ENCODE measurements at regions of chr11 and their contacts with region 1.

Region 1: GRCh38 chr11:69337211-69337721 is 43.3 kb downstream of the MYEOV start:
- DNase-seq: peak in 4 of 9 experiments; percentile 28 to 67 (median 56)
- ATAC-seq: peak; percentile 86
- H3K4me3 ChIP-seq: peak overlapping the region in 1 of 2 experiments; percentile 2
- H3K4me3 Mint-ChIP-seq: peak overlapping the region; percentile 62
- H3K27ac ChIP-seq: no peak overlapping the region
- H3K27ac Mint-ChIP-seq: peak overlapping the region; percentile 89
- H3K4me1 ChIP-seq: peaks cover 14% of the 10 kb centered on the region
- H3K4me1 Mint-ChIP-seq: peaks cover 40% of the 10 kb centered on the region
- H3K27me3 ChIP-seq: no peaks in the 10 kb centered on the region
- H3K27me3 Mint-ChIP-seq: no peaks in the 10 kb centered on the region
- CTCF ChIP-seq: no peak

Region 2: GRCh38 chr11:69075421-69076128 is 261.7 kb before region 1 on chr11:
- CTCF ChIA-PET with region 1: no interaction called
- POLR2A ChIA-PET with region 1: no interaction called
- intact Hi-C with region 1: no loop called
- DNase-seq: no peak
- ATAC-seq: no peak
- H3K4me3 ChIP-seq: no peak overlapping the region
- H3K4me3 Mint-ChIP-seq: no peak overlapping the region
- H3K27ac ChIP-seq: no peak overlapping the region
- H3K27ac Mint-ChIP-seq: no peak overlapping the region
- H3K4me1 ChIP-seq: peaks cover 16% of the 10 kb centered on the region
- H3K4me1 Mint-ChIP-seq: peaks cover 20% of the 10 kb centered on the region
- H3K27me3 ChIP-seq: no peaks in the 10 kb centered on the region
- H3K27me3 Mint-ChIP-seq: no peaks in the 10 kb centered on the region
- CTCF ChIP-seq: no peak

Region 3: DNA sequence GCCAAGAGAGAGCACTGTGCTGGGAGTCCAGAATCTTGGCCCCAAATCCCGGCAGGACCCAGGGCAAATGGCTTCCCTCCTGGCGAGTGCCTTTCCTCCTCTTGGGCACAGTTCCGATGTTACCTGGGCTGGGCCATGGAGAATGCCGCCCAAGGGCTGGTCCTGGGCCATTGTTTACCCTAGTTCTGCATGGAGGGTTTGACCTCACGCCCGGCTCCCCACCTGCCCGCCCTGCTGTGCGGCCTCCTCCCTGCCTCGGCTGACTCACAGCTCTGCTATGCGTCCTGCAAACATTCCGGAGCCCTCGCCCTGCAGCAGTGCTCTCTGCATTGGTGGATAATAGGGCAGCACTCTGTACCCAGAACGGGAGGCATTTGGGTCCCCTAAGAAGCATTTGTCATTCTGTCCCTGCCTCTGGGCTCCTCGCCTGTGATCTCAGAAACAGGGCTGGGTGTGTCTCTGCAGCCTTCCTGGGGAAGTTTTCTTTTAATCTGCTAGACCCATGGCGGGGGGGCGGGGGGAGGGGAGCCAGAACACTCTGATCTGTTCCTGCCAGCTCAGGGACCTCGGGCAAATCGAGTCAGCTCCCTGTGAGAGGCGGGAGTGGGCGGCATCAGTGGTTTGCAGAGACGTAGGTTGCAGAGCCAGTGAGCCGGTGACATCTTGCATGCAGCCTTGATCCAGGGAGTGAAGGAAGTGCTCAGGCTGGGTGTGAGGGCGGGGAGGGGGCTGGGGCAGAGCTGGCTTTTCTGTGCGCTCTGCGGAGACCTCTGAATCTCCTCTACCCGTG is 214.4 kb before region 1 on chr11:
- CTCF ChIA-PET with region 1: no interaction called
- POLR2A ChIA-PET with region 1: no interaction called
- intact Hi-C with region 1: loop called in 1 of 2 experiments (anchors 5 kb)
- DNase-seq: peak in 8 of 9 experiments; percentile 8 to 80 (median 54)
- ATAC-seq: peak; percentile 87
- H3K4me3 ChIP-seq: peak overlapping the region in 1 of 2 experiments; percentile 42
- H3K4me3 Mint-ChIP-seq: peak overlapping the region; percentile 69
- H3K27ac ChIP-seq: no peak overlapping the region
- H3K27ac Mint-ChIP-seq: peak overlapping the region; percentile 84
- H3K4me1 ChIP-seq: peaks cover 40% of the 10 kb centered on the region
- H3K4me1 Mint-ChIP-seq: peaks cover 41% of the 10 kb centered on the region
- H3K27me3 ChIP-seq: no peaks in the 10 kb centered on the region
- H3K27me3 Mint-ChIP-seq: no peaks in the 10 kb centered on the region
- CTCF ChIP-seq: no peak